Activated B cell treated with CpG ODN at 0.5 μM for 24 hours (primary cell): ENCODE measurements at regions of chr11 and their contacts with region 1.

Region 1: GRCh38 chr11:67353317-67354074 is at the start of gene POLD4:
- DNase-seq: peak; percentile 98
- ATAC-seq: peak; percentile 78
- H3K4me3 Mint-ChIP-seq: peak within 1 kb of the TSS; percentile 95
- H3K27ac Mint-ChIP-seq: peak within 1 kb of the TSS; percentile 99
- H3K4me1 Mint-ChIP-seq: peaks cover 89% of the 10 kb centered on the region
- H3K27me3 Mint-ChIP-seq: no peaks in the 10 kb centered on the region
- CTCF ChIP-seq: no peak
- total RNA-seq, gene POLD4: 166 and 169 TPM in 2 replicates

Region 2: GRCh38 chr11:67288452-67289225 is 64.9 kb before region 1 on chr11:
- CTCF ChIA-PET with region 1: interaction called, 4 read pairs
- POLR2A ChIA-PET with region 1: interaction called, 50 read pairs
- intact Hi-C with region 1: loop called (anchors 5 kb)
- DNase-seq: peak; percentile 96
- ATAC-seq: peak; percentile 76
- H3K4me3 Mint-ChIP-seq: peak overlapping the region; percentile 80
- H3K27ac Mint-ChIP-seq: peak overlapping the region; percentile 98
- H3K4me1 Mint-ChIP-seq: peaks cover 46% of the 10 kb centered on the region
- H3K27me3 Mint-ChIP-seq: no peaks in the 10 kb centered on the region
- CTCF ChIP-seq: no peak

Region 3: DNA sequence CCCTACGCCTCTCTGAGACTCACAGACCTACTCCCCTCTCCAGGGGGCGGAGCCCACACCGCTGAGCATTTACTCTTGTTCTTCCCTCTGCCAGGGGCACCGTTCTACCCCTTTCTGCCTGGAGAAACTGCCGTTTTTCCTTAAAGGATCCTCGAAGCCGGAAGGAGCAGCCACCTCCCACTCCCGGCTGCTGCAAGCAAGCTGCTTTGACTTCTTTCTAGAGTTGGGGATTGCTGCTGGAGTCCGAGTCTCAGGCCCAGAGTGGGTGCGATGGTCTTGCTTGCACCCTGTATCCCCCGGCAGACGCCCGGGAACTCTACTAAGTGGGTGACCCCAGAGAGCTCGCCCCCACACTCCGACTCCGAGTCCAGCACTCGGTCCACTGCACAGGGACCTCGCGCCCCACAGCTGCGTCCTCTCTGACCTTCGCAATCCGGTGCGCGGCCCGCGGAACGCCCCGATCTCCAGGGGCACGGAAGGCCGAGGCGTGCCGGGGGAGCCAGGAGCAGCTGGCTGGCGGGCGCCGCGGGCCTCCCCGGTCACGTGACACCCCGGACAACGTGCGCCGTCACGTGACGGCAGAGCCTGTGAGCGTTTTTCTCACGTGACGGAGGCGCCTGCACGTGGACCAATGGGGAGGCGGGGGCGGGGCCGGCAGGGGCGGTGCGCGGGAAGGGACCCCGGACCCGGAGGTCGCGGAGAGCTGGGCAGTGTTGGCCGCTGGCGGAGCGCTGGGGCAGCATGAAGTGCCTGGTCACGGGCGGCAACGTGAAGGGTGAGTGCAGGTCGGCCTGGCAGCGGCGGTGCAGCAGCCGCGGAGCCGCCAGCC is 38.0 kb after region 1 on chr11 and contains the start of gene RAD9A:
- CTCF ChIA-PET with region 1: interaction called, 735 read pairs
- POLR2A ChIA-PET with region 1: interaction called, 1,307 read pairs
- intact Hi-C with region 1: no loop called
- DNase-seq: peak; percentile 85
- ATAC-seq: peak; percentile 79
- H3K4me3 Mint-ChIP-seq: peak within 1 kb of the TSS; percentile 89
- H3K27ac Mint-ChIP-seq: peak within 1 kb of the TSS; percentile 80
- H3K4me1 Mint-ChIP-seq: peaks cover 40% of the 10 kb centered on the region
- H3K27me3 Mint-ChIP-seq: no peaks in the 10 kb centered on the region
- CTCF ChIP-seq: no peak
- total RNA-seq, gene RAD9A: 30.4 and 35.2 TPM in 2 replicates

Region 4: GRCh38 chr11:67428052-67428914 is 74.8 kb after region 1 on chr11 and contains the start of gene RPS6KB2:
- CTCF ChIA-PET with region 1: no interaction called
- POLR2A ChIA-PET with region 1: interaction called, 101 read pairs
- intact Hi-C with region 1: loop called (anchors 2 kb)
- DNase-seq: peak; percentile 99
- ATAC-seq: peak; percentile 81
- H3K4me3 Mint-ChIP-seq: peak within 1 kb of the TSS; percentile 98
- H3K27ac Mint-ChIP-seq: peak within 1 kb of the TSS; percentile 93
- H3K4me1 Mint-ChIP-seq: peaks cover 41% of the 10 kb centered on the region
- H3K27me3 Mint-ChIP-seq: no peaks in the 10 kb centered on the region
- CTCF ChIP-seq: no peak
- total RNA-seq, gene RPS6KB2: 66.9 and 74.5 TPM in 2 replicates

Region 5: GRCh38 chr11:67507864-67508485 is 154.5 kb after region 1 on chr11 and contains the start of gene CDK2AP2:
- CTCF ChIA-PET with region 1: interaction called, 5 read pairs
- POLR2A ChIA-PET with region 1: interaction called, 6 read pairs
- intact Hi-C with region 1: loop called (anchors 1 kb)
- DNase-seq: peak; percentile 90
- ATAC-seq: peak; percentile 77
- H3K4me3 Mint-ChIP-seq: peak within 1 kb of the TSS; percentile 88
- H3K27ac Mint-ChIP-seq: peak within 1 kb of the TSS; percentile 94
- H3K4me1 Mint-ChIP-seq: peaks cover 42% of the 10 kb centered on the region
- H3K27me3 Mint-ChIP-seq: no peaks in the 10 kb centered on the region
- CTCF ChIP-seq: no peak
- total RNA-seq, gene CDK2AP2: 67.1 and 68.5 TPM in 2 replicates

Region 6: GRCh38 chr11:67705264-67705663 is 351.8 kb after region 1 on chr11:
- CTCF ChIA-PET with region 1: no interaction called
- POLR2A ChIA-PET with region 1: no interaction called
- intact Hi-C with region 1: loop called (anchors 10 kb)
- DNase-seq: no peak
- ATAC-seq: no peak
- H3K4me3 Mint-ChIP-seq: no peak overlapping the region
- H3K27ac Mint-ChIP-seq: no peak overlapping the region
- H3K4me1 Mint-ChIP-seq: no peaks in the 10 kb centered on the region
- H3K27me3 Mint-ChIP-seq: peaks cover 19% of the 10 kb centered on the region
- CTCF ChIP-seq: no peak